H1 (cell line): ENCODE measurements at regions of chr12 and their contacts with region 1.

Region 1: GRCh38 chr12:19529951-19530635 is 90.8 kb downstream of the AEBP2 start:
- DNase-seq: no peak
- H3K4me3 ChIP-seq: no peak overlapping the region
- H3K27ac ChIP-seq: no peak overlapping the region
- H3K4me1 ChIP-seq: no peaks in the 10 kb centered on the region
- H3K27me3 ChIP-seq: no peaks in the 10 kb centered on the region
- CTCF ChIP-seq: no peak
- EP300 ChIP-seq: no peak
- POLR2A ChIP-seq: no peak
- RAD21 ChIP-seq: no peak

Region 2: GRCh38 chr12:19515179-19515578 is 14.9 kb before region 1 on chr12:
- CTCF ChIA-PET with region 1: interaction called, 3 read pairs
- POLR2A ChIA-PET with region 1: interaction called, 20 read pairs
- DNase-seq: no peak
- H3K4me3 ChIP-seq: no peak overlapping the region
- H3K27ac ChIP-seq: no peak overlapping the region
- H3K4me1 ChIP-seq: peaks cover 0 to 13% (median 2%) of the 10 kb centered on the region in 4 experiments; a peak in 4 of 7 replicates
- H3K27me3 ChIP-seq: no peaks in the 10 kb centered on the region
- CTCF ChIP-seq: no peak
- EP300 ChIP-seq: no peak
- POLR2A ChIP-seq: no peak
- RAD21 ChIP-seq: no peak

Region 3: DNA sequence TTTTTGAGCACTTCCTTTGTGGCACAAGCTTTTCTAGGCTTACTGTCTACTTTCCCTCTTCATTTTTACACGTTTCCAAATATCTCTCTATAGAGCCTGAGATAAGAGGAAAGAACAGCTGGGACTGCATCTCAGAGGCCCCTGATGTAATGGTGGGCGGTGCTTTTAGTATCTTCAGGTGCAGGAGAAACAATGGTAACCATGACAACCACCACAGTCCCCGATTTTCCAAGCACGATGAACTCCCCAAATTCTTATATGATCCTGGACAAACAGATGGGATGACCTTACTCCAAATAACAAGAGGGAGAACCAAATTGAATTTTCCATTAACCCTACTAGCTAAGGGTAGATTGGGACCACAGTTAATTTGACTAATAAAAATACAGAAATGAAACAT is 12.5 kb after region 1 on chr12:
- CTCF ChIA-PET with region 1: interaction called, 5 read pairs
- POLR2A ChIA-PET with region 1: interaction called, 13 read pairs
- DNase-seq: no peak
- H3K4me3 ChIP-seq: no peak overlapping the region
- H3K27ac ChIP-seq: no peak overlapping the region
- H3K4me1 ChIP-seq: peaks cover 0 to 2% (median 0%) of the 10 kb centered on the region in 4 experiments; a peak in 1 of 7 replicates
- H3K27me3 ChIP-seq: no peaks in the 10 kb centered on the region
- CTCF ChIP-seq: no peak
- EP300 ChIP-seq: no peak
- POLR2A ChIP-seq: no peak
- RAD21 ChIP-seq: no peak

Region 4: DNA sequence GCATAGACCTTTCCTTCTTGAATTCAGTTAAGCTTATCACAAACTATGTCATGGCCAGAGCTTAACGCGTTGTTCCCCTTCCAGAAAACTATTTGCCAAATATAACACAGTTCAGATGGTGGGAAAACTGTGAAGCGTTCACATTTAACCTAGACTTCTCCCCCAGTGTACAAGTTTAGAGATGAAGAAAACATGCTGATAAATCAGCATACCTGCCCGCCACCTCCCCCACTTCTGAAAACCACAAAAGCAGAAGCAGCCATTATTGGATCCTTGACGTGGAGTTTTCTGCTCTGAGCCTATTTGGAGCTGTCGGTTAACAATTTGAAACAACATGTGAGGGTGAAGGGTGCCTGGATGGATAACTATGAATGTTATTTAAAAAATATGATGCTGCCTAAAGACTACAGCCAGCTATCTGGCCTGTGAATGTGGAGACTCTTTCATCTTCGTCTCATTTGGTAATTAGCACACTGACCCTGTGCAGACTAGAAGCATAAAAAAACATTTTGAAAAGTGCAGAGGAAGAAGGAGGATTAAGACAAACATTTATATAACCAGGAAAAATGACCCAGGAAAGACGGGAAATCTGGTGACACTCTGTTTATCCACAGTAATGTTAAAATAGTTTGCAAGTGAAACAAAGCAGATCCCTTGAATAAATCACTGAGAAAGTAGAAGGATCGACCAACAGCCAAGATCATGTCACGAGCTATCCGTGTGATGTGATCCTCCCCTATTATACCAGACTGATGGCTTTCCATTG is 317.4 kb after region 1 on chr12:
- CTCF ChIA-PET with region 1: no interaction called
- POLR2A ChIA-PET with region 1: no interaction called
- DNase-seq: no peak
- H3K4me3 ChIP-seq: no peak overlapping the region
- H3K27ac ChIP-seq: no peak overlapping the region
- H3K4me1 ChIP-seq: no peaks in the 10 kb centered on the region
- H3K27me3 ChIP-seq: no peaks in the 10 kb centered on the region
- CTCF ChIP-seq: no peak
- EP300 ChIP-seq: no peak
- POLR2A ChIP-seq: no peak
- RAD21 ChIP-seq: no peak